ENCODE measurements at regions of chr1 and their contacts with region 1.

Region 1: DNA sequence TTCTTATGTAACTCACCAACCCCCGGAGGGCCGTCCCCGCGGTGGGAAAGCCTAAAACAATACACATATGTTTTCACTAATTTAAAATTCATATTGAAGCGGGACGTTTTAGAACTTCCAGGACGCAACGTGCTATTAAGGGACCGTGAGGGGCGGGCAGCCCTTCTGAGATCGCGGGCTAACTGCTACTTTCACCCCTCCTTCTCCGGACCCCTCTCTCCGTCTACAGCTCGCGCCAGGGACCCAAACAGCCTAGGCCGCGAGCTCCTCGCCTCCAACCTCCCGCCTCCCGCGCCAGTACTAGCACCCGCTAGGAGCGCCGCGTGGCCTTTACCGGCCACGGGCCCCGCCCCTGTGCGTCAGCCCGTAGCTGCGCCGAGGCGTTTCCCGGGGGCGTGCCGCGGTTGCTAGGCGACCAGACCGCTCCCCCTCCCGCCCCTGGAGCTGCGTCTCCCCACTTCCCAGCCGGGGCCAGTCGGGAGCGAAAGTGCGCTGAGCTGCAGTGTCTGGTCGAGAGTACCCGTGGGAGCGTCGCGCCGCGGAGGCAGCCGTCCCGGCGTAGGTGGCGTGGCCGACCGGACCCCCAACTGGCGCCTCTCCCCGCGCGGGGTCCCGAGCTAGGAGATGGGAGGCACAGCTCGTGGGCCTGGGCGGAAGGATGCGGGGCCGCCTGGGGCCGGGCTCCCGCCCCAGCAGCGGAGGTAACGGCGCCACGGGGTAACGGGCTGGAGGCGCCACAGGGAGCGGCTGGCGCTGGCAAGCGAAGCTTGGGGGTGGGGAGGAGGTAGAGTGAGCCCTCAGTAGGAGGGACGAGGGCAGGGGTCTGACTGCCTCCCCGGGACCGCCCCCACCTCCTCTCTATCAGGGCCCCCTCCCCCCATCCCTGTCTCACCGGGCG is at the start of gene DYRK3:
- DNase-seq: peak; percentile 99
- H3K4me3 Mint-ChIP-seq: peak within 1 kb of the TSS; percentile 87
- H3K27ac Mint-ChIP-seq: peak within 1 kb of the TSS; percentile 94
- H3K4me1 Mint-ChIP-seq: peaks cover 25% of the 10 kb centered on the region
- H3K27me3 Mint-ChIP-seq: peaks cover 10% of the 10 kb centered on the region
- total RNA-seq, gene DYRK3: 16.5 and 16.9 TPM in 2 replicates

Region 2: GRCh38 chr1:206600527-206600926 is 34.8 kb before region 1 on chr1:
- intact Hi-C with region 1: no loop called
- DNase-seq: no peak
- H3K4me3 Mint-ChIP-seq: no peak overlapping the region
- H3K27ac Mint-ChIP-seq: no peak overlapping the region
- H3K4me1 Mint-ChIP-seq: peaks cover 3% of the 10 kb centered on the region
- H3K27me3 Mint-ChIP-seq: no peaks in the 10 kb centered on the region

Region 3: DNA sequence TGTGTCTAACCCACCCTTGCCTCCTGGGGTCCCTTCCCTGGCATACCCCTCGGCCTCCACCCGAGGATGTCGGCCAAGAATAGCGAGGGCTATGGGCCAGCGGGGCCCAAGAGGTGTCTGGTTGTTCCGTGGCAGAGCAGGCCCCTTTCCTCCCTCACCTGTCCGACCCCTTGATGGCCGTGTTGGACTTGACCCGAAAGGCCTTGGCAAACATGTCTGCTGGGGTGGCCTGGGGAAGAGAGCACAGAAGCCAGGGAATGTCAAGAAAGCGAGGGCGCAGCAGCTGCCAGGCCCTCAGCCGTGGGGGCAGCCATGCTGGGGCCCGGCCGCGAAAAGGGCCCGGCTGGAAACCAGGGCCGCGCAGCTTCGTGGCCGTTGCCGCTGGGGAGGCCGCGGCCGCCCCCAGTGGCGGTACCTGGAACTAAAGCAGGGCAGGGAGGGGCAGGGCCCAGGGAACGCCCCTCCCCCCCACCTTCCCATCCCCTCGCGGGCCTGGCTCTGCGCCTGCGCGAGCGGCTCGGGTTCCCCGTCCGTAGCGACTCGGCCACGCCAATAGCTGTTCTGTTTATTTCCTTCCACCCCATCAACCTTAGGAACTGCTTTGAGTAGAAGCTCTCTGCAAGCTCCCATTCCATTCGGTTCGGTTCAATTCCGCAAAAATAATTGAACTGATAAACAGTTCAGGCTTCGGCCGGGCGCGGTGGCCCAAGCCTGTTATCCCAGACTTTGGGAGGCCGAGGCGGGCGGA is 23.0 kb before region 1 on chr1 and contains the start of gene EIF2D:
- intact Hi-C with region 1: loop called (anchors 1 kb)
- DNase-seq: peak; percentile 98
- H3K4me3 Mint-ChIP-seq: peak within 1 kb of the TSS; percentile 99
- H3K27ac Mint-ChIP-seq: peak within 1 kb of the TSS; percentile 93
- H3K4me1 Mint-ChIP-seq: peaks cover 29% of the 10 kb centered on the region
- H3K27me3 Mint-ChIP-seq: peaks cover 12% of the 10 kb centered on the region
- total RNA-seq, gene EIF2D: 86.6 and 89.4 TPM in 2 replicates

Region 4: DNA sequence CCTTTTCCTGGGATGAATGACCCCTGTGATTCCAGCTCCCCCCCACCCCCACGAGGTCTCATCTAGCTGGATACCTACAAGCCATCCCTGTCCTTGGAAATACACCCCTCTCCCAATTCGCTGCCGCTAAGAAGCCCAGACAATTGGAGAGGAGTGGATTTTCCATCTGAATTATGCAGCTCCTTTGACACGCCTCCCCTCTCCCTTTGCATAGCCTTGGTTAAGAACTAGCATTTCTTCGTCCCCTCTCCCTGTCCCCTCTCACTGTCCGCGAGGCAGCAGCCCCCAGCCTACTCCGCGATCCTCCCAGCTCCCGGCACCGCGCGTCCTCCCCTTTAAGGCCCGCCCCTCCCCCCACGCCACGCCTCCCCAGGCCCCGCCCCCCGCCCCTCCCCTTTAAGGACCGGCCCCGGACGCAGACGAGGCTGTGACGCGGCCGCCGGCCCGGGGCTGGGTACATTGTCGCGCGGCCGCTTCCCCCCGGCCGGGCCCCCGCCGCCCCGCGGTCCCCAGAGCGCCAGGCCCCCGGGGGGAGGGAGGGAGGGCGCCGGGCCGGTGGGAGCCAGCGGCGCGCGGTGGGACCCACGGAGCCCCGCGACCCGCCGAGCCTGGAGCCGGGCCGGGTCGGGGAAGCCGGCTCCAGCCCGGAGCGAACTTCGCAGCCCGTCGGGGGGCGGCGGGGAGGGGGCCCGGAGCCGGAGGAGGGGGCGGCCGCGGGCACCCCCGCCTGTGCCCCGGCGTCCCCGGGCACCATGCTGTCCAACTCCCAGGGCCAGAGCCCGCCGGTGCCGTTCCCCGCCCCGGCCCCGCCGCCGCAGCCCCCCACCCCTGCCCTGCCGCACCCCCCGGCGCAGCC is 49.4 kb after region 1 on chr1 and contains the start of gene MAPKAPK2:
- intact Hi-C with region 1: loop called (anchors 1 kb)
- DNase-seq: peak; percentile 91
- H3K4me3 Mint-ChIP-seq: peak within 1 kb of the TSS; percentile 99
- H3K27ac Mint-ChIP-seq: peak within 1 kb of the TSS; percentile 95
- H3K4me1 Mint-ChIP-seq: peaks cover 53% of the 10 kb centered on the region
- H3K27me3 Mint-ChIP-seq: peaks cover 7% of the 10 kb centered on the region
- total RNA-seq, gene MAPKAPK2: 95.1 and 97.4 TPM in 2 replicates

Region 5: DNA sequence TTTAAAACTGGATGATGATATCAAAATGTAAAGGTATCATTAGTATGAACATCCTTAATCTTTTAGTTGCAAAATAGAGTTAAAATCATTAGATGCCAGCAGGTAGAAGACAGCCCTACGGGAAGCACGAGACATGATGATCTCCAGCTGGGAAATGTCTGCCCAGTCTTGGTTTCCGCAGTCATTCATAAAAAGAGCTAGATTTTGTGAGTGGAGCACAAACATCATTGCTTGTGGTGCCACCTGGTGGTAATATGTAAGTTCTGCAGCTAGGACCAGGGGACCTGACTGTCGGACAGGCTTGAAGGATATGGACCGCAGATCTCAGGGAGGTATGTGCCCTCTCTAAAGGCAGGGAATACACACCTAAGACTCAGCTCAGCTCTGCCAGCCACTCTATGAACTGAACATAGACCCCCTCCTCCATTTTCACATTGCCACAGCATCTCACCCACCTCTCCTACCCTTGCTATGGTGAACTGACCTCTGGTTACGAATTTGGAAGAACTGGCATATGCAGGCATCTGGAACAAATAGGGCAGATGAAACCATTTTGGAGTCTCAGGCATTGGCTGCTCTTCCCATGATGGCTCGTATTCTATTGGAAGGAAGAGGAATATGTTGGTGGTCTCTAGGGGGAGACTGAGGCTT is 277.2 kb after region 1 on chr1:
- intact Hi-C with region 1: loop called (anchors 1 kb)
- DNase-seq: peak; percentile 91
- H3K4me3 Mint-ChIP-seq: no peak overlapping the region
- H3K27ac Mint-ChIP-seq: no peak overlapping the region
- H3K4me1 Mint-ChIP-seq: peaks cover 59% of the 10 kb centered on the region
- H3K27me3 Mint-ChIP-seq: peaks cover 3% of the 10 kb centered on the region